ENCODE measurements at regions of chr16 and their contacts with region 1.

Region 1: GRCh38 chr16:53892155-53892554 is 188.2 kb downstream of the FTO start:
- DNase-seq: peak; percentile 81
- ATAC-seq: peak; percentile 78
- H3K4me3 ChIP-seq: no peak overlapping the region
- H3K27ac ChIP-seq: no peak overlapping the region
- H3K4me1 ChIP-seq: peaks cover 4% of the 10 kb centered on the region
- H3K27me3 ChIP-seq: no peaks in the 10 kb centered on the region
- CTCF ChIP-seq: peak; percentile 85
- POLR2A ChIP-seq: no peak
- RAD21 ChIP-seq: peak; percentile 83

Region 2: DNA sequence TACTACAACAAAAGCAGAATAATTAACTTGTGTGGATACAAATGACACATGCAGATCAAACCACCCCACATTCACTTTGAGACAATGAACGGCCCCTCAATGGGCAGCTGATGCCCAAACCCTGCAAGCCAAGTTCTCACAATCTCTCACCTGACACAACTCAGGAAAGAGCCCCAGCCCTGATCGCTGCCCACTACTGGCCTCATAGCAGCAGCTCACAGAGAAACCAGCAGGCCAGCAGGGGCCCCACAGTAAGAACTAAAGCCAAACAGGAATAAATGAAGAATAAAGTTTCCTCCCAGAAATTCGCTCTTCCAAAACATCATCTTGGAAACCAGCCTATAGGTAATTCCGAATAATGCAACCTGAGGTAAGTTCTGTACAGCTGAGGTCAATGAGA is 396.8 kb before region 1 on chr16:
- CTCF ChIA-PET with region 1: interaction called, 11 read pairs
- POLR2A ChIA-PET with region 1: no interaction called
- dilution Hi-C with region 1: no loop called
- in situ Hi-C with region 1: no loop called
- intact Hi-C with region 1: no loop called
- DNase-seq: no peak
- ATAC-seq: no peak
- H3K4me3 ChIP-seq: no peak overlapping the region
- H3K27ac ChIP-seq: no peak overlapping the region
- H3K4me1 ChIP-seq: no peaks in the 10 kb centered on the region
- H3K27me3 ChIP-seq: no peaks in the 10 kb centered on the region
- CTCF ChIP-seq: no peak
- POLR2A ChIP-seq: no peak
- RAD21 ChIP-seq: no peak

Region 3: GRCh38 chr16:53692142-53692541 is 200.0 kb before region 1 on chr16:
- CTCF ChIA-PET with region 1: no interaction called
- POLR2A ChIA-PET with region 1: no interaction called
- dilution Hi-C with region 1: no loop called
- in situ Hi-C with region 1: no loop called
- intact Hi-C with region 1: no loop called
- DNase-seq: no peak
- ATAC-seq: no peak
- H3K4me3 ChIP-seq: no peak overlapping the region
- H3K27ac ChIP-seq: no peak overlapping the region
- H3K4me1 ChIP-seq: no peaks in the 10 kb centered on the region; the same call in 1 of the 2 replicates
- H3K27me3 ChIP-seq: no peaks in the 10 kb centered on the region
- CTCF ChIP-seq: no peak
- POLR2A ChIP-seq: no peak
- RAD21 ChIP-seq: no peak

Region 4: DNA sequence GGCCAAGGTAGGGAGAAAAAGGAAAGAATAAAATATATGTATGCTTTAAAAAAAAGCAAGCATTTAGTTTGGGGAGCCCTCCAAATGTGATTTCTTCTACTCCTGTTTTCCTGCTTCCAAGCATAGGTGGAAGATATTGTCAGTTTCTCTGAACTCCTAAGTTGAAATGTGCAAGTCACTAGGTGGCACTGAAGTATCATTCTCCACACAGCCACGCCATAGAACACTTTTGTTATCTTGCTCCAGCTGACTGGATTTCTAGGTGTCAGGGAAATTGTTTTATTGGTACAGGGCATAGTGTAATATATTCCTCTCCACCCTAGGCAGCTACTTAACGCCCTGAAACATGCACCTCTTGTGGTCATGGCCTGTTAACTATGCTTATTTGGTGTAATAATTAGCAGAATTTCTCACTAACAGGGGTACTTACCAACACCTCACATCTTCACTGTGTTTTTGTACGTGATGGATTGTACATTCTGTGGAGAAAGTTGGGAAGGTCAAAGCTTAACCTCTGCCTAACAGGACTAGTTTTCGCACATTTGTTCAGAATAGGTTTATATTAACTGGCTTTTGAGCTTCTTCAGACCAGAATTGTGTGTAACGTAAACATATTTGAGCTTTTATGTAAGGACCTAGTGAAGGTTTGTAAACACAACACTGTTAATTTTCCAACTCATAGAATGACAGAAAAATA is 118.9 kb before region 1 on chr16:
- CTCF ChIA-PET with region 1: interaction called, 3 read pairs
- POLR2A ChIA-PET with region 1: interaction called, 3 read pairs
- dilution Hi-C with region 1: no loop called
- in situ Hi-C with region 1: no loop called
- intact Hi-C with region 1: loop called (anchors 5 kb)
- DNase-seq: peak; percentile 79
- ATAC-seq: peak; percentile 46
- H3K4me3 ChIP-seq: no peak overlapping the region
- H3K27ac ChIP-seq: no peak overlapping the region
- H3K4me1 ChIP-seq: peaks cover 22% of the 10 kb centered on the region
- H3K27me3 ChIP-seq: no peaks in the 10 kb centered on the region
- CTCF ChIP-seq: peak; percentile 86
- POLR2A ChIP-seq: no peak
- RAD21 ChIP-seq: peak; percentile 92

Region 5: GRCh38 chr16:53822936-53823529 is 69.1 kb before region 1 on chr16:
- CTCF ChIA-PET with region 1: no interaction called
- POLR2A ChIA-PET with region 1: no interaction called
- dilution Hi-C with region 1: no loop called
- in situ Hi-C with region 1: no loop called
- intact Hi-C with region 1: no loop called
- DNase-seq: no peak
- ATAC-seq: no peak
- H3K4me3 ChIP-seq: no peak overlapping the region
- H3K27ac ChIP-seq: no peak overlapping the region
- H3K4me1 ChIP-seq: peaks cover 12% of the 10 kb centered on the region
- H3K27me3 ChIP-seq: no peaks in the 10 kb centered on the region
- CTCF ChIP-seq: no peak
- POLR2A ChIP-seq: no peak
- RAD21 ChIP-seq: no peak

Region 6: DNA sequence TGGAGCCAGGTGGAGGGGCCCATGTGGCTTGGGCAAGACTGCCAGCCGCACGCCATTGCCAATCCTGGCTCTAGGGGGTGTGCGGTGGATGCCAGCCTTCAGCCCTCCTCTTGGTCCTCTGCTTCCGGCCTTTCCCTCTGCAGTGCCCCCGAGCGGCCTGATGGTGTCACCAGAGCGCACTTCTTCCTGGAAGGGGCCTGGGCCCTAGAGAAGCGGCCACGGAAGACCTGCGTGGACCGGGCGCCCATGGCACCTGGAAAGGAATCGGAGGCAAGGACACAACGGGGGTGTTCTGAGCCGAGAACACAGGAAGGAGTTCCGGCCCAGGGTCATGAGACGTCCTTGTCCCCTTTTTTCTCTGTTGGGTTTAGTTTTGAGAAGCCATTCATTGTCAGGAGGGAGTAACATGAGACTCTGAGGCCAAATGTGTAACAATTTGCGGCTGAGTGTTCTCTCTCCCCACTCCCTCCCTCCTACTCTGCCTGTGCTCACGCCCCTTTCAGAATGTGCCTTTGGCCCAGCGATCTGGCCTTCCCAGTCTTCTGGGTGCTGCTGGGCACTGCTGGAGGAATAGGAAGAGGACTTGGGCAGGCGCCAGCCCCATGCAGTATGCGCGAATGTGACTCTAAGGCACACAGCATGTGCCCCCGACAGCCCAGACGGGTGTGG is 301.6 kb after region 1 on chr16:
- CTCF ChIA-PET with region 1: no interaction called
- POLR2A ChIA-PET with region 1: no interaction called
- dilution Hi-C with region 1: no loop called
- in situ Hi-C with region 1: no loop called
- intact Hi-C with region 1: loop called (anchors 5 kb)
- DNase-seq: peak; percentile 25
- ATAC-seq: peak; percentile 99
- H3K4me3 ChIP-seq: no peak overlapping the region
- H3K27ac ChIP-seq: no peak overlapping the region
- H3K4me1 ChIP-seq: no peaks in the 10 kb centered on the region
- H3K27me3 ChIP-seq: peaks cover 8% of the 10 kb centered on the region; the same call in 1 of the 2 replicates
- CTCF ChIP-seq: peak; percentile 57
- POLR2A ChIP-seq: no peak
- RAD21 ChIP-seq: peak; percentile 47

Region 7: DNA sequence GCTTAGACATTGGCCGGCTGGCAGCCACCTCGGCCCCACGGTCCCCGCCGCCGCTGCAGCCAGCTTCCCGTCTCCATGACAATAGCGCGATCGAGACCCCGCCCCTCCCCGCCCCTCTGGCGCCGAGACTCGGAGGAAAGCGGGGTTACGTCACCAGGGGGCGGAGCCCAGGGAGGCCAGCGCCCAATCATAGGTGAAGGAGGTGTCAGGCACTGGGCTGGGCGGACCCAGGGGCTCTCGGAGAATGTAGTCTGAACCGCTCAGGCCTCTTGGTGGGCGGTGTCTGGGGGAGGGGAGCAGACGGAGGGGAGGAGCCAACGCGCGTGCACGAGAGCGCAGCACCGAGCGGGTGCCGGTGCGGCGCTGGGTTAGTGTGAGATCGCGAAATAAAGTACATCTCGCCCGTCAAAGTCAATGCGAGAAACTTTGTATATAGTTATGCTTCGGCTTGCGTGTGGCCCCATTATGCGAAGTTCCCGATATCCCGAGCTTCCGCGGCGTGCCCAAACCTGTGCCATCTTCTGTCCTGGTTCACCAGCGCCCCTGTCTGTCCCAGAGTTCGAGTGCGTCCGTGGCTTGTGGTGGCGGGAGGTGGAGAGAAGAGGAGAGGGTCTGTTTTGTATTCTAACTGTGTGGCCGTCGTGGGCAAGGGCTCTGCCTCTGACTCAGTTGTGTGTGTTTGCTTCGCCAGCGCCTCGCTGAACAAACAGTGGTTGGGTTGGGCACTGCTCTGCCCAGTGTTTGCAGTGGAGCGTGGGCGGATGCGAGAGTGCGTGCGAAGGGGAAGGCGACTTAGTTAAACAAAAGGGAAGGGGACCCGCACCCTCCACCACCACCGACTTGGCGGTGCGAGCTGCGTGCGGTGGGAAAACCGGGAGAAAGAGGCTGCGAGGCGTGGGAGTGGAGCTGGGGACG is 1037.2 kb after region 1 on chr16:
- CTCF ChIA-PET with region 1: no interaction called
- POLR2A ChIA-PET with region 1: no interaction called
- dilution Hi-C with region 1: no loop called
- in situ Hi-C with region 1: loop called (anchors 25 kb)
- intact Hi-C with region 1: loop called (anchors 5 kb)
- DNase-seq: peak; percentile 94
- ATAC-seq: peak; percentile 91
- H3K4me3 ChIP-seq: peak overlapping the region; percentile 53
- H3K27ac ChIP-seq: no peak overlapping the region
- H3K4me1 ChIP-seq: no peaks in the 10 kb centered on the region
- H3K27me3 ChIP-seq: peaks cover 38% of the 10 kb centered on the region
- CTCF ChIP-seq: no peak
- POLR2A ChIP-seq: no peak
- RAD21 ChIP-seq: no peak

Region 8: DNA sequence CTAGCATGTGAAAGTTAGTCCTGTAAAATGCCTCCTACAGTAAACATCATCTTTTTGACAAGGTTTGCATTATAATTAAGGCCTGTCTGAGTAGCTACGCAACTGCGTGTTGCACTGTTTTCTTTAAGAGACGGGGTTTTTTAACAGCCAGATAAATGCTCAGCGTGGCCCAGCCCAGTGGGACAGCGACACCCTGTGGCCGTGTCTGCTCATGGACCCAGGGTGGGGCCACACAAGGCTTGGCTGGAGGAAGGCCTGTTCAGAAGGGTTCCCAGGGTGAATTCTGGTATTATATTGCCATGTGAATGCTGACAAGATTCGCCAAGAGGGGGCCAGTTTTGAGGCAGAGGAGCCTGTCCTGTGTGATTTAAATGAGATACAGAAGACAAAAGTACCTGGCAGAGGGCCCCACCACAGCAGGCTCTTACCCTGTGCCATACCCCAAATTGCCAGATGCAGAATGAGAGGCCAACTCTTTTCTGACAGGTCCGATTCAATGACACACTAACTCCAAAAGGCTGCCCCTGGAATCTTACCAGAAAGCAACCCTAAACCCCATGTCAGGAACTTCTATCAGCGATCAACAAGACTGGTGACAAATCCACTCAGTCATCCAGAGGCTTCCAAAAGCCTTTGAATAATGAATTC is 1365.9 kb after region 1 on chr16:
- CTCF ChIA-PET with region 1: no interaction called
- POLR2A ChIA-PET with region 1: no interaction called
- dilution Hi-C with region 1: no loop called
- in situ Hi-C with region 1: no loop called
- intact Hi-C with region 1: loop called (anchors 1 kb)
- DNase-seq: peak; percentile 26
- ATAC-seq: no peak
- H3K4me3 ChIP-seq: no peak overlapping the region
- H3K27ac ChIP-seq: no peak overlapping the region
- H3K4me1 ChIP-seq: no peaks in the 10 kb centered on the region
- H3K27me3 ChIP-seq: no peaks in the 10 kb centered on the region
- CTCF ChIP-seq: peak; percentile 58
- POLR2A ChIP-seq: no peak
- RAD21 ChIP-seq: peak; percentile 76